Ascending aorta (tissue), 2 donors: ENCODE measurements at regions of chr2 and their contacts with region 1.

Region 1: GRCh38 chr2:200703127-200703925 is 108.4 kb upstream of the BZW1 start:
- DNase-seq: no peak
- H3K4me3 ChIP-seq: no peak overlapping the region
- H3K27ac ChIP-seq: no peak overlapping the region
- H3K4me1 ChIP-seq: no peaks in the 10 kb centered on the region
- H3K27me3 ChIP-seq: no peaks in the 10 kb centered on the region
- CTCF ChIP-seq: peak; percentile 24 to 58 (median 45)

Region 2: GRCh38 chr2:199979832-199980628 is 723.3 kb before region 1 on chr2:
- intact Hi-C with region 1: loop called (anchors 10 kb)
- DNase-seq: peak in 1 of 2 donors; percentile 89
- H3K4me3 ChIP-seq: peak overlapping the region in 1 of 2 donors; percentile 20
- H3K27ac ChIP-seq: no peak overlapping the region
- H3K4me1 ChIP-seq: no peaks in the 10 kb centered on the region
- H3K27me3 ChIP-seq: no peaks in the 10 kb centered on the region
- CTCF ChIP-seq: peak; percentile 76 to 87 (median 79)

Region 3: DNA sequence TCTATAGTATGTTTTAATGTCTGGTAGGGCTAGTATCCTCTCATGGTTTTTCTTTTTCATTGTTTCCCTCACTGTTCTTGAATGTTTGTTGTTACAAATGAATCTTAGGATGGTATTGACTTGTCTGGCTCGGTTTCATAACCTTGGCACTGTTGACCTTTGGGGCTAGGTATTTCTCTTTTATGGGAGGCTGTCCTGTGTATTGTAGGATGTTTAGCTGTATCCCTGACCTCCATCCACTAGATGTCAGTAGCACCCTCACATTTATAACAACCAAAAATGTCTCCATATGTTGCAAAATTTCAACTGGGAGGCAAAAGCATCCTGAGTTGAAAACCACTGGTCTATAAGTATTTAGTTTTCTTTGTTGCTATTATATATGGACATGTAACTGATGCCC is 124.5 kb before region 1 on chr2:
- intact Hi-C with region 1: loop called (anchors 2 kb)
- DNase-seq: no peak
- H3K4me3 ChIP-seq: no peak overlapping the region
- H3K27ac ChIP-seq: no peak overlapping the region
- H3K4me1 ChIP-seq: no peaks in the 10 kb centered on the region
- H3K27me3 ChIP-seq: no peaks in the 10 kb centered on the region
- CTCF ChIP-seq: peak; percentile 16 to 41 (median 20)

Region 4: GRCh38 chr2:200618587-200619021 is 84.7 kb before region 1 on chr2:
- intact Hi-C with region 1: loop called (anchors 10 kb)
- DNase-seq: no peak
- H3K4me3 ChIP-seq: no peak overlapping the region
- H3K27ac ChIP-seq: no peak overlapping the region
- H3K4me1 ChIP-seq: no peaks in the 10 kb centered on the region
- H3K27me3 ChIP-seq: no peaks in the 10 kb centered on the region
- CTCF ChIP-seq: no peak